ENCODE measurements at regions of chr11 and their contacts with region 1.

Region 1: DNA sequence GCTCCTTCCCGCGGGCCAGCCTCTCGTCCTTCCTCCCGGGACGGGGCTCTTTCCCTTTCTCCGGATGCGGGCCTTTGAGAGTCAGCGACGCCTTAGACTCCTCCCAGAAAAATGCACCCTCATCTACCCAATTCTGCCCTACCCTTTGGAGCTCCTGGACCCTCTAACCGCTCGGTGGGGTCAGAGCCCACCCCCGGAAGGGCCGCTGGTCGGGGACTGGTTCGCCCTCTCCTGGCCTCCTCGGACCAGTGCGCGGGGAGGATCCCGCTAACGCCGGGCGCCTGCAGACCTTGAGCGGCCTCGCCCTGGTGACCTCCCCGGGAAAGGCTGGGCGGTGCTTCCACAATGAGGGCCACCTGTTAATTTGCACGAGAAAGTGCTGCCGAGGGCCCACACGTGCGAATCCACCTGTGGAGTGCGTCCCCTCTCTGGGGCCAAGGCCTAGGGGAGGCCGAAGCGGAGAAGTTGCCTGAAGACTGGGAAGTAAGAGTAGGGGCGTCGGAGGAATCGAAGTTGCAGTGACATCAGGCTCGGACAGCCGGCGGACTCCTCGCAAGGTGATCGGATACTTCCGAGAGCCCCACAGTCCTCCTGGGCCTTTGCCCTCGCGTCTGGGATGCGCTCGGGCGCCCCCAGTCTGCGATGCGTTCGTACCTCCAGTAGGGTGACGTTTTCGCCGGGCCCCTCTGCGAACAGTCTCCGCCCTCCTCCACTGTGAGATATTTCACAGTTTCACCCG is 61.5 kb downstream of the ENDOD1 start:
- DNase-seq: peak; percentile 94
- H3K4me3 Mint-ChIP-seq: peak overlapping the region; percentile 74
- H3K27ac Mint-ChIP-seq: peak overlapping the region; percentile 92
- H3K4me1 Mint-ChIP-seq: peaks cover 43% of the 10 kb centered on the region
- H3K27me3 Mint-ChIP-seq: peaks cover 16% of the 10 kb centered on the region

Region 2: DNA sequence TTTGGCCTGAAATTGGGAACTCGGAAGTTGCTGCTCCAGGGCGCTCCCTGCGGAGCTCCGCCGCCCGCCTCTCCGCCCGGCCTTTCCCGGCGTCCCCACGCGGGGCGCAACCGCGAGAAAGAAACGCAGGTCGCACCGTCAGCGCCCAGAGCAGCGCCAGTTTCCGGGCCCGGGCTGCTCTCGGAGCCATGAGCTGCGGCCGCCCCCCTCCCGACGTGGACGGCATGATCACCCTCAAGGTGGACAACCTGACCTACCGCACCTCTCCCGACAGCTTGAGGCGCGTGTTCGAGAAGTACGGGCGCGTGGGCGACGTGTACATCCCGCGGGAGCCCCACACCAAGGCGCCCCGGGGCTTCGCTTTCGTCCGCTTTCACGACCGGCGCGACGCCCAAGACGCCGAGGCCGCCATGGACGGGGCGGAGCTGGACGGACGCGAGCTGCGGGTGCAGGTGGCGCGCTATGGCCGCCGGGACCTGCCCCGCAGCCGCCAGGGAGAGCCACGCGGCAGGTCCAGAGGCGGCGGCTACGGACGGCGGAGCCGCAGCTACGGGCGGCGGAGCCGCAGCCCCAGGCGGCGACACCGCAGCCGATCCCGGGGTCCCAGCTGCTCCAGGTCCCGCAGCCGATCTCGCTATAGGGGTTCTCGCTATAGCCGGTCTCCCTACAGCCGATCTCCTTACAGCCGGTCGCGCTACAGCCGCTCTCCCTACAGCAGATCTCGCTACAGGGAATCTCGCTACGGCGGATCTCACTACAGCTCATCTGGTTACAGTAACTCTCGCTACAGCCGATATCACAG is 83.9 kb before region 1 on chr11:
- CTCF ChIA-PET with region 1: interaction called, 133 read pairs
- DNase-seq: peak; percentile 83
- H3K4me3 Mint-ChIP-seq: peak overlapping the region; percentile 89
- H3K27ac Mint-ChIP-seq: peak overlapping the region; percentile 97
- H3K4me1 Mint-ChIP-seq: peaks cover 24% of the 10 kb centered on the region
- H3K27me3 Mint-ChIP-seq: peaks cover 6% of the 10 kb centered on the region

Region 3: GRCh38 chr11:95231127-95231880 is 80.2 kb after region 1 on chr11 and contains the start of gene SESN3:
- CTCF ChIA-PET with region 1: interaction called, 18 read pairs
- DNase-seq: peak; percentile 99
- H3K4me3 Mint-ChIP-seq: no peak within 1 kb of the TSS
- H3K27ac Mint-ChIP-seq: peak within 1 kb of the TSS; percentile 93
- H3K4me1 Mint-ChIP-seq: peaks cover 56% of the 10 kb centered on the region
- H3K27me3 Mint-ChIP-seq: peaks cover 7% of the 10 kb centered on the region

Region 4: GRCh38 chr11:95764267-95764898 is 613.3 kb after region 1 on chr11:
- CTCF ChIA-PET with region 1: interaction called, 272 read pairs
- DNase-seq: no peak
- H3K4me3 Mint-ChIP-seq: no peak overlapping the region
- H3K27ac Mint-ChIP-seq: no peak overlapping the region
- H3K4me1 Mint-ChIP-seq: peaks cover 3% of the 10 kb centered on the region
- H3K27me3 Mint-ChIP-seq: no peaks in the 10 kb centered on the region

Region 5: GRCh38 chr11:96424693-96425092 is 1273.6 kb after region 1 on chr11:
- CTCF ChIA-PET with region 1: interaction called, 10 read pairs
- DNase-seq: no peak
- H3K4me3 Mint-ChIP-seq: no peak overlapping the region
- H3K27ac Mint-ChIP-seq: no peak overlapping the region
- H3K4me1 Mint-ChIP-seq: no peaks in the 10 kb centered on the region
- H3K27me3 Mint-ChIP-seq: peaks cover 20% of the 10 kb centered on the region